SK-N-SH (cell line): ENCODE measurements at regions of chr17 and their contacts with region 1.

Region 1: DNA sequence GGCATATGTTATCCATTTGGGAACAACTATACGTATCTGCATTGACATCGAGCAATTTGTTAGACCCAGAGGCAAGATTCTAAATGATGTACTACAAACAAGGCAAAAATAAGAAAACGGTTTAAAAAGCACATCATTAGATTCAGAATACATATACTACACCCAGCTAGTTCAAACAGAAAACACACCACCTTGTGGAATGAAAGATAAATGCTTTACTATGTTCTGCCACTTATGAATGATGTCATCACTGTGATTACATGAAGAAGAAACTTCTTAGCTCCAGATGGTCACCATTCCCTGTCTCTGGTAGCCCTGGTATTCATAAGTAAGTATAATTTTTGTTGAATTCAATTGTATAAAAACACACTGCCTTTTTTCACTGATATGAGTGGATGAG is 7.8 kb downstream of the NACA2 start:
- DNase-seq: peak; percentile 79
- H3K4me3 ChIP-seq: no peak overlapping the region
- H3K27ac ChIP-seq: peak overlapping the region in 1 of 2 experiments; percentile 76; a peak in 1 of 4 replicates
- H3K4me1 ChIP-seq: peaks cover 13 to 26% of the 10 kb centered on the region in 2 experiments; a peak in 3 of 4 replicates
- H3K27me3 ChIP-seq: no peaks in the 10 kb centered on the region
- CTCF ChIP-seq: peak; percentile 70
- EP300 ChIP-seq: peak in 1 of 2 experiments; percentile 85; a peak in 3 of 4 replicates
- RAD21 ChIP-seq: peak; percentile 76

Region 2: GRCh38 chr17:61495145-61495857 is 87.9 kb before region 1 on chr17:
- CTCF ChIA-PET with region 1: no interaction called
- POLR2A ChIA-PET with region 1: no interaction called
- DNase-seq: no peak
- H3K4me3 ChIP-seq: no peak overlapping the region
- H3K27ac ChIP-seq: no peak overlapping the region
- H3K4me1 ChIP-seq: peaks cover 4 to 16% of the 10 kb centered on the region in 2 experiments; a peak in 2 of 4 replicates
- H3K27me3 ChIP-seq: no peaks in the 10 kb centered on the region
- CTCF ChIP-seq: no peak
- EP300 ChIP-seq: no peak
- RAD21 ChIP-seq: no peak

Region 3: DNA sequence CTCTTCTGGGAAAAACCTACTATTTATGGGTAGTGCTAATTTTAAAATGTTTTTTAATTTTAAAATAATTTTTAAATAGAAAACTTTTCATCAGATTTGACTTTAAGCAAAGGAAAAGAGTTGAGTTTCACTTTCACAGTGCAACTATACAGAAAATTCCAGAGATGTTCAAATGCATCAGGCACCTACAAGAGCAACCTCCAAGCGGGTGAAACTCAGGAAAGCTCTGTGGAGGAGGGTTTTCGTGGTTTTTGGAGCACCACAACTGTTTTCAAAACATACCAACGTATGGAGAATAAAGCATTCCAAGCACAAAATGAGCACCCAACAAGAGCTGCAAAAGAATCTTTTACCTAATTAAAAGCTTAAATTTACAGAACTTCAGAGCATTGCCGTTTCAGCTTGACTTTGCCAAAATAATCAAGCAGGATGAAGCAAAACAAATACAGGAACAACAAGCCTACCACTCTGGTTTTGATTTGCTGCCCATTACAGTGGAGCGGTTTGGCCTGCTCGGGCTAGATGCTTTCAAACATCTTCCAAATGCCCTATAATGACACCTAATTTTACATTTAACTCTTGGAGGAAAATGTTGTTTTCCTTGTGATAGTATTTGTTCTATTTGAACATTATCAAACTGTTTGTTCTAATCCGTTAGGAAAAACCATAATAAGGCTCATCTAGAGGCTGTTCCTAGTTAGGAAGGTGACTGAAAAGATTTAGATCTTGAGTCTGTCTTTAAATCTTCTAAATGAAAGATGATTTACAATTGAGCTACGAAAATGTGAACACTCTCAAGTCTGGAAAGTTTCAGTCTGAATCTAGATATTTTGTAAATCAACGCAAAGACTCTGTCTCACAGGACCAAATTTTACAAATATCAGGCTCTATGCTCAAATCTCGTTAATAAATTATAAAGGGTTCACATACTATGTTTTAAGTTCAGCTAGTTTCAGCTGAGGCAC is 26.7 kb before region 1 on chr17:
- CTCF ChIA-PET with region 1: interaction called, 13 read pairs
- POLR2A ChIA-PET with region 1: no interaction called
- DNase-seq: peak; percentile 65
- H3K4me3 ChIP-seq: no peak overlapping the region
- H3K27ac ChIP-seq: peak overlapping the region in 1 of 2 experiments; percentile 78; a peak in 2 of 4 replicates
- H3K4me1 ChIP-seq: peaks cover 10 to 25% of the 10 kb centered on the region in 2 experiments; a peak in 3 of 4 replicates
- H3K27me3 ChIP-seq: no peaks in the 10 kb centered on the region
- CTCF ChIP-seq: no peak
- EP300 ChIP-seq: peak in 1 of 2 experiments; percentile 83; a peak in 2 of 4 replicates
- RAD21 ChIP-seq: no peak

Region 4: DNA sequence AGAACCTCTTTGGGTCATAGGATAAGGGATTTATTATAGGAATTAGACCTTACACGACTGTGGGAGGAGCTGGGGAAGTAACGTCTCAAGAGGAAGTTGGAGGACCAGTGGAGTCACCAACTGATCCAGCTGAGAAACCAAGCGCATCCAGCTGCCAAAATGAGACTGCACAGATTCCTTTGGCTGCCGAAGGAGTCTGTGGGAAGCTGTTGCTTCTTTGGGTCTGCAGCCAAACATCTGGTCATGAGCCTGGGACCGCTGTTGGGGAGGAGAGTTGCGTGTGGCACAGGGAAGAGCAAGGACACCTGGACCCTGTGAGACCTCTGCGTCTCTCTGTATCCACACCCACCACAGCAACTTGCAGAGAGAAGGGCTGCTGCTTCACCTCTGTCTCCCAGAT is 10.2 kb after region 1 on chr17:
- CTCF ChIA-PET with region 1: interaction called, 12 read pairs
- POLR2A ChIA-PET with region 1: no interaction called
- DNase-seq: no peak
- H3K4me3 ChIP-seq: no peak overlapping the region
- H3K27ac ChIP-seq: no peak overlapping the region
- H3K4me1 ChIP-seq: peaks cover 0 to 6% of the 10 kb centered on the region in 2 experiments; a peak in 1 of 4 replicates
- H3K27me3 ChIP-seq: no peaks in the 10 kb centered on the region
- CTCF ChIP-seq: no peak
- EP300 ChIP-seq: no peak
- RAD21 ChIP-seq: no peak

Region 5: GRCh38 chr17:61619493-61619892 is 36.3 kb after region 1 on chr17:
- CTCF ChIA-PET with region 1: no interaction called
- POLR2A ChIA-PET with region 1: no interaction called
- DNase-seq: no peak
- H3K4me3 ChIP-seq: no peak overlapping the region
- H3K27ac ChIP-seq: no peak overlapping the region
- H3K4me1 ChIP-seq: no peaks in the 10 kb centered on the region; a peak in 2 of 4 replicates
- H3K27me3 ChIP-seq: no peaks in the 10 kb centered on the region
- CTCF ChIP-seq: no peak
- EP300 ChIP-seq: no peak
- RAD21 ChIP-seq: no peak